ENCODE measurements at regions of chr20 and their contacts with region 1.

Region 1: DNA sequence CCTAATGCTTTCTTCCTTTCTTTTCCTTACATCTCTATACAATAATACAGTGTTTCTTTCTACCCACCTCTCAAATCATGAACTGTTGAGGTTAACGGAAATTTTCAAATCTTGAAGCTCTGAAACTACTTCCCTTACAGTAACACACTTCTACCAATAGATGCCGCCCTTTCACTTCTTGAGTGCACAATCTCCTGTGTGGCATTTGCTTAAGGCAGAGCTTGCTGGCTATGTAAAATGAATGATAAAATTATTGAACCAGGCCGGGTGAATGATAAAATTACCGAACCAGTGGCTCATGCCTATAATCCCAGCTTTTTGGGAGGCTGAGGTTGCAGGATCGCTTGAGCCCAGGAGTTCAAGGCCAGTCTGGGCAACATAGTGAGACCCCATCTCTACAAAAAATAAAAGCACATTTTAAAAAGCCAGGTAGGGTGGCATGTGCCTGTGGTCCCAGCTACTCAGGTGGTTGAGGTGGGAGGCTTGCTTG is 56.8 kb downstream of the KCNS1 start:
- DNase-seq: peak; percentile 56
- ATAC-seq: peak; percentile 88
- H3K4me3 Mint-ChIP-seq: no peak overlapping the region
- H3K27ac Mint-ChIP-seq: peak overlapping the region; percentile 97
- H3K4me1 Mint-ChIP-seq: peaks cover 77% of the 10 kb centered on the region
- H3K27me3 Mint-ChIP-seq: no peaks in the 10 kb centered on the region
- CTCF ChIP-seq: peak; percentile 88

Region 2: DNA sequence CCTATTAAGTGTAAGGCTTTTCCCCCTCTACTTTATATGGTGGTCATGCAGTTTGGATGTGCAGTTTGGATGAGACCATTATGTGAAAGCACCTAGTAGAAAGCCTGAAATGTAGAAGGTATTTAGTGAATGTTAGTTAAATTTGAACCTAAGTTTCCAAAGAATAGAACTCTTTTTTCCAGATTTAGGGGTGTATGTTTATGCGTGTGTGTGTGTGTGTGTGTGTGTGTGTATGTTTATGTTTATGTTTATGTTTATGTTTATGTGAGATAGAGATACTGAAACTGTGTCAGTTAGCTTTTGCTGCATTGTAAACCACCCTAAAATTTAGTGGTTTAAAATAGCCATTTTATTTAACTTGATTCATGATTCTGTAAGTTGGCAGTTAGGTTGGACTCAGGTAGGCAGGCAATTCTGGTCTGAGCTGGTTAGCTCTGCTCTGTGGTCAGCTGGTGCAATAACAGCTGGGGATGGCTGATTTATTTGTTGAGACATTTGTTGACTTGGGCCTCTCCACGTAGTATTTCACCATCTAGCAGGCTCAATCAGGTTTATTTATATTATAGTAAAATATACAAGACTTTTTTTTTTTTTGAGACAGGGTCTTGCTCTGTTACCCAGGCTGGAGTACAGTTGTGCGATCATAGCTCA is 23.8 kb before region 1 on chr20:
- CTCF ChIA-PET with region 1: interaction called, 11 read pairs
- POLR2A ChIA-PET with region 1: no interaction called
- intact Hi-C with region 1: no loop called
- DNase-seq: no peak
- ATAC-seq: no peak
- H3K4me3 Mint-ChIP-seq: no peak overlapping the region
- H3K27ac Mint-ChIP-seq: peak overlapping the region; percentile 54
- H3K4me1 Mint-ChIP-seq: peaks cover 60% of the 10 kb centered on the region
- H3K27me3 Mint-ChIP-seq: no peaks in the 10 kb centered on the region
- CTCF ChIP-seq: no peak

Region 3: GRCh38 chr20:45061244-45061643 is 17.1 kb after region 1 on chr20:
- CTCF ChIA-PET with region 1: interaction called, 16 read pairs
- POLR2A ChIA-PET with region 1: interaction called, 3 read pairs
- intact Hi-C with region 1: no loop called
- DNase-seq: peak; percentile 21
- ATAC-seq: peak; percentile 74
- H3K4me3 Mint-ChIP-seq: no peak overlapping the region
- H3K27ac Mint-ChIP-seq: peak overlapping the region; percentile 41
- H3K4me1 Mint-ChIP-seq: peaks cover 74% of the 10 kb centered on the region
- H3K27me3 Mint-ChIP-seq: no peaks in the 10 kb centered on the region
- CTCF ChIP-seq: no peak

Region 4: DNA sequence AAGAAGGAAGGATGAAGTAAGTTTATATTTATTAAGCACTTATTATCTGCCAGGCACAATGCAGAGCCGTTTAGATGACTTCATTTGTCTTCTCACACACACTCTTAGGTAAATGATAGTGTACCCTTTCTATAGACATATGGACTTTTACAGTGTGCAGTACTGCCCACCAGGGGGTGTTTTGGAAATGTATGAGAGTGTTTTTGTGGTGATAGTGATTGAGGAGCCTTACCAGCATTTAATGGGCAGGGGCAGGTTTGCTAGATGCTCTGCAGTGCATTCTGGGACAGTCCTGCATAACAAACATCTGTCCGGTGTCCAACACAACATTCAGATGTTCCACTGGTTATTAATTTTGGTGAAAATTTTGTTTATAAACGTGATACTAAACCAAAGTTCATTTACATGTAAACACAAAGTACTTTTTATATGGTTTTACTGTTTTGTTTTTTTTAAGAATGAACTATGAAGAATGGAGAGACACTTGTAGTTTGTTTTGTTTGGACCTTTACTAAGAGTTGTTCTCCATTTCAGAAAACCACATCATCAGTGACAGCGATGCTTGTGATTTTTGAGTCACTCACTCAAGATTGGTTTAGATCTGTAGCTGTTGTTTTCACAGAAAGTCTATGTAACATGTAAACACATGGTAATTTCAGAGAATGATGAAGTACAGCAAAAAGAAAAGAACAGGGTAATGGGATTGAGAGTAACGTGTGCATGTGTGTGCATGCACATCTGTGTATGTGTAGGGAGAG is 36.9 kb after region 1 on chr20:
- CTCF ChIA-PET with region 1: interaction called, 21 read pairs
- POLR2A ChIA-PET with region 1: interaction called, 3 read pairs
- intact Hi-C with region 1: no loop called
- DNase-seq: no peak
- ATAC-seq: peak; percentile 45
- H3K4me3 Mint-ChIP-seq: no peak overlapping the region
- H3K27ac Mint-ChIP-seq: peak overlapping the region; percentile 14
- H3K4me1 Mint-ChIP-seq: peaks cover 4% of the 10 kb centered on the region
- H3K27me3 Mint-ChIP-seq: no peaks in the 10 kb centered on the region
- CTCF ChIP-seq: peak; percentile 36

Region 5: DNA sequence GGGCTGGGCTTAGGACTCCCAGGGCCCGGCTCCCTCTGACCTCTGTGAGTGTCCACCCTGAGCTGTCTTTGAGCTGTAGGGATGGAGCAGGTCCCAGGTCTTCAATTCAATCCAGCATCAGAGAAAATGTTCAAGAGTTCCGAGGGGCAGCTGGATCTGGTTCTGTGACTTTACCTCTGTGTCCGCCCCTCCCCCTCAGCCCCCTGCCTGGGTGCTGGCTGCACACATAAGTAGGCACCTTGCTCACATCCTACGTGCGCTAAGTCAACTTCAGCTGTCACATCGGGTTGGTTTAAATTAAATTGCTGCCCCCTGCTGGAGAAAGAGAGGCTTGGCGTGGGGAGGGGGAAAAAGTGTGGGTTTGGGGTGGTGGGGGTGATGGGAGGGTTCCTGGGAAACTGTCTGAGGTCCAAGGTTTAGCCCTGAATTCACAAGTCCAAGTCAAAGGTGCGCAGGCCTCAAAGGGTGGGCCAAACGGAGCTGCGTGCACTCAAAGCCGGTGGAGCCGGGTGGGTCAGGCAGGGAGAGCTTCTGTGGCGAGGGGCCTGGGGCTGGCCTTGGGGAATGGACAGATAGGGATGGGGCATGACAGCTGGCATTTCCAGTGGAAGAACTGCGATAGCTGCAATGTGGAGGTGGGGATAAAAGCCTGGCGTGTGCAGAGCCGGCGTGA is 67.8 kb after region 1 on chr20:
- CTCF ChIA-PET with region 1: interaction called, 24 read pairs
- POLR2A ChIA-PET with region 1: no interaction called
- intact Hi-C with region 1: no loop called
- DNase-seq: peak; percentile 53
- ATAC-seq: peak; percentile 43
- H3K4me3 Mint-ChIP-seq: no peak overlapping the region
- H3K27ac Mint-ChIP-seq: no peak overlapping the region
- H3K4me1 Mint-ChIP-seq: peaks cover 17% of the 10 kb centered on the region
- H3K27me3 Mint-ChIP-seq: no peaks in the 10 kb centered on the region
- CTCF ChIP-seq: peak; percentile 76